Ovary (tissue), 10 donors: ENCODE measurements at regions of chr5 and their contacts with region 1.

Region 1: DNA sequence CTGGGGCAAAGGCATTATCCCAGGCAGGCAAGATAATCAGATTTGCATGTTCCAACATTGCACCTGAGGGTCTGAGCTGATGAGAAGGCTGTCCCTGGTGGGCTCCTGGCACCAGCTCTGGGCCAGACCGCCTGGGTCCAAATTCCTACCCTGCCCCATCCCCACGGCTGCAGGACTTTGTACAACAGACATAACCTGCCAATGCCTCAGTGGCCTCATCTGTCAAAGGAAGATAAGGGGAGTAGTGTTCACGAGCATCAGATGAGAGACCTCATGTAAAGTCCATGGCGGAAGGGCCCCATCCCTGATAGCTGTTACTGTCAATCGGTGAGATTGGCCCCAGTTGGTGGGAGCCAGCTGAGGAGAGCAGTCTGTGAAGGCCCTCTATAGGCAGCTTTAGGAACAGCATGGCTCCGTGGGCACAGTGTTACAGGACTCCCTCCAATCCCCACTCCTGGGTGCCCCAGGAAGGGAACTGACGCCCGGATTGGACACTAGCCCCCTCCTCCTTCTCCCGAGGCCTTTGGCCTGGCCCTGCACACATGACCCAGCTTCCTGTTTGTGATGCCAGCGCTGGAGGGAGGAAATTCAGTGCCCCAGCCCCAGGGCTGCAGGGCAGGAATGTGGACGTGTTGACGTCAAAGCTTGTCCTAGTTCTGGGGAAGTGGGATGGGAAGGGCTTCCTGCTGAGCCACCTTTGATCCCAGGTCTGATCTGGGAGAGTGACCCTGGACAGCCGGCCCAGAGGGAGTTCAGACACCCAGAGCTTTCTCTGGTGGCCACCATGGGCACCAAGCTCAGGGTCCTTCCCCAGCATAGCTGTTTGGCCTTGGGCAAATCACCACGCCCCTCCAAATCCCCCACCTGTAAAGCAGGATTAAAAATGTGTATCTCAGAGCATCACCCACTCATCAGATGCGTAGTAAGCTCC is 56.2 kb downstream of the DUSP1 start:
- DNase-seq: peak; percentile 49 to 78 (median 72)
- H3K4me3 ChIP-seq: no peak overlapping the region
- H3K27ac ChIP-seq: no peak overlapping the region
- H3K4me1 ChIP-seq: no peaks in the 10 kb centered on the region
- H3K27me3 ChIP-seq: peaks cover 2% of the 10 kb centered on the region
- CTCF ChIP-seq: peak; percentile 36 to 73 (median 67)
- EP300 ChIP-seq: peak; percentile 60
- POLR2A ChIP-seq: no peak

Region 2: GRCh38 chr5:172764849-172765765 is 50.4 kb after region 1 on chr5:
- intact Hi-C with region 1: loop called in 3 of 4 experiments (anchors 5 kb)
- DNase-seq: peak; percentile 86 to 98 (median 89)
- H3K4me3 ChIP-seq: peak overlapping the region; percentile 82
- H3K27ac ChIP-seq: peak overlapping the region; percentile 40 to 98
- H3K4me1 ChIP-seq: peaks cover 11% of the 10 kb centered on the region
- H3K27me3 ChIP-seq: no peaks in the 10 kb centered on the region
- CTCF ChIP-seq: no peak
- EP300 ChIP-seq: peak; percentile 92
- POLR2A ChIP-seq: no peak

Region 3: DNA sequence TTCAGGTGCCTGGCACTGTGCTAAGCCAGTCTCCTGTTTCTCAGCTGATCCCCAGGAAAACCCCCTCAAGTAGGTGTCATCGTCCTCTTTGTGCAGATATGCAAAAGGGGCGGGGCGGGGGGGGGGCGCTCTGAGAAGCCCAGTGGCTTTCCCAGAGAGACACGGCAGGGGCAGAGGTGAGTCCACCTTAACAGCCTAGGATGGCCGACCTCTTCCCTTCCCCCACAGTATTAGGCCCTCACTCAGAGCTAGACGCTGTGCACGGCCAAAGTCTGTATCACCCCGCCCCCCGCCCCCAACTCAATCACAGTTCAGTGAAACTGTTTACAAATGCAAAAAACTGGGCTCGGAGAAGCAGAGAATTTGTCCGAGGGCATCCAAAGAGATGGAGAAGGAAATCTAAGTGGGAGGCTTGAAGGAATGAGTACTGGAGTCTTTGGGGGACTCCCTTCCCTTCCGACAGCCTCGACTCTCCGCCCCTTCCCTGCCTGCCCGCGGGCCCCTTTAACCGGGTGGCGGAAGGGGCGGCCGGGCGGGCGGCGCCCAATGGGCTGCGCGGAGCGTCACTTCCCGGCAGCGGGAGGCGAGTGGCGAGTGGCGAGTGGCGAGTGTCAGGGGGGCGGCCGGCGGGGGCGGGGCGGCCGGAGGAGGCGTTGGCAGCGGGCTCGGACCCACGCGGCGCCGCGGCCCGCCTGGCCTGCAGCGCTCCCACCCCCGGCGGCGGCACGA is 119.1 kb after region 1 on chr5 and contains the start of gene ERGIC1:
- intact Hi-C with region 1: no loop called
- DNase-seq: peak; percentile 73 to 86 (median 80)
- H3K4me3 ChIP-seq: peak within 1 kb of the TSS; percentile 71
- H3K27ac ChIP-seq: peak within 1 kb of the TSS; percentile 57 to 58
- H3K4me1 ChIP-seq: peaks cover 13% of the 10 kb centered on the region
- H3K27me3 ChIP-seq: no peaks in the 10 kb centered on the region
- CTCF ChIP-seq: no peak
- EP300 ChIP-seq: no peak
- POLR2A ChIP-seq: peak; percentile 57
- total RNA-seq, gene ERGIC1: 41.7 to 132 (median 92.3) TPM

Region 4: DNA sequence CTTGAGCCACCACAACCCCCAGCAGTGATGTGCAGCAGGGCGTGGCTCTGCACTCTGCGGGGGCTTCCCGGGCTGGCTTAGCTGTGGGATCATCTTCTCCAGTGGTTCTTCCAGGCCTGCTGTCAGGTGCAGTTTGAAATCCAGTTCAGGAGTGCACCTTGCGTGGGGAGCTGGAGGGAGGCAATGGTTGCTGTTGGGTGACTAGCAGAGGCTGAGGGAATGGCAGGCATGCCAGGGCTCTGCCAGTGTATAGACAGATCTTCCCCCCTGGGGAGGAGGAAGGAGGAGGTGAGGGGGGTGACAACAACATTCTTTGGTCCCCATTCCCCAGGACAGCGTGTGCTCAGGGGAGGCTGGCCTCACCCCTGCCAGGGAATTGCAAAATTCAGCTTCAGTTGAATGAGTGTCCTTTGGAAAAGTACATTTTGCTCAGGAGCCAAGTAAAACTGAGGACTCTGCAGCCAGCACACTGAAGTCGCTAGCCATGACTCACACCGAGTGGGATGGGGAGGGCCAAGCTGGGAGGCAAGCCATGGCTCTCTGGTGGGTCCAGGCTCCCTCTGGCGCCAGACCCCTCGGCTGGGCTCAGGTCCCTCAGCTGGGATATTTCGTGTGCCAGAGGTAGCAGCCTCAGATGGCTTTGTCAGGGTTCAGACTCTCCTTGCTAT is 154.3 kb after region 1 on chr5:
- intact Hi-C with region 1: loop called in 1 of 4 experiments (anchors 5 kb)
- DNase-seq: peak; percentile 84 to 92 (median 87)
- H3K4me3 ChIP-seq: no peak overlapping the region
- H3K27ac ChIP-seq: peak overlapping the region; percentile 63 to 76
- H3K4me1 ChIP-seq: peaks cover 56% of the 10 kb centered on the region
- H3K27me3 ChIP-seq: no peaks in the 10 kb centered on the region
- CTCF ChIP-seq: peak in 2 of 3 donors; percentile 59 to 64
- EP300 ChIP-seq: peak; percentile 95
- POLR2A ChIP-seq: no peak

Region 5: DNA sequence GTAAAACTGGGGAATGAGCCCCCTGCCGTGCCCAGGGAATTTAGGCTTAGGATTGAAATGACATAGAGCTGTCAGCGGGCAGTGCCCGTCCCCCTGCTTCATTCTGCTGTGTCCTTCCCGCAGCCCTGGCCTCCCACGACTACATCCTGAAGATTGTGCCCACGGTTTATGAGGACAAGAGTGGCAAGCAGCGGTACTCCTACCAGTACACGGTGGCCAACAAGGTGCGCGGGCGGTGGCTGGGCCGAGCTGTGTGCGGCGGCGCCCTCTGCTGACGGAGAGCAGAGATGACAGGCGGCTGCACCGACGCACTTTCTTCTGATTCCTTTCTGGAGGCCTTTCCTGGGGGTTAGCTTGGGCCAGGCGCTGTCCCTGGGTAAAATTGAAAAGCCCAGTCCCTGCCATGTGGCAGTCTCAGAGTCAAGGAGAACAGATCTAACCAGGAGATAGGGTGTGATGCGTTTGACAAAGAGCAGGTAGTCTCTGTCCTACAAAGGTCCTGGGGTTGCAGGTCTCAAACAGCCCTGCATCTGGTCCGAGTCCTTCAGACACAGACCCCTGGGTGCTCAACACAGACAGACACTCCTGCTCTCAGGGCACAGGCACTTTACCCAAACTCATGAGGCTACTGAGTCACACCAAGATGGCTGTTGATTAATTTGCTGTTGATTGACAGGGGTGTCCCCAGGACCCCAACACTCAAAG is 217.7 kb after region 1 on chr5:
- intact Hi-C with region 1: loop called (anchors 2 kb)
- DNase-seq: peak; percentile 62 to 84 (median 77)
- H3K4me3 ChIP-seq: no peak overlapping the region
- H3K27ac ChIP-seq: no peak overlapping the region
- H3K4me1 ChIP-seq: peaks cover 2% of the 10 kb centered on the region
- H3K27me3 ChIP-seq: no peaks in the 10 kb centered on the region
- CTCF ChIP-seq: peak; percentile 79 to 98 (median 97)
- EP300 ChIP-seq: no peak
- POLR2A ChIP-seq: peak; percentile 36